Activated T-helper 2 cell treated with anti-CD3 and anti-CD28 coated beads, Interferon-gamma antibody, Interleukin-2, Interleukin-4, amounts not matched to agents 10 μg/mL and 5 μg/mL and 100 μg/mL, durations not matched to agents 14 hours and 24 hours and 36 hours (primary cell): ENCODE measurements at regions of chr10 and their contacts with region 1.

Region 1: GRCh38 chr10:23368816-23369640 is 24.4 kb upstream of the C10orf67 start:
- DNase-seq: peak; percentile 16
- H3K4me3 Mint-ChIP-seq: peak overlapping the region; percentile 53
- H3K27ac Mint-ChIP-seq: peak overlapping the region; percentile 60
- H3K4me1 Mint-ChIP-seq: peaks cover 55% of the 10 kb centered on the region
- H3K27me3 Mint-ChIP-seq: no peaks in the 10 kb centered on the region

Region 2: GRCh38 chr10:22962817-22963216 is 406.2 kb before region 1 on chr10:
- intact Hi-C with region 1: no loop called
- DNase-seq: no peak
- H3K4me3 Mint-ChIP-seq: no peak overlapping the region
- H3K27ac Mint-ChIP-seq: no peak overlapping the region
- H3K4me1 Mint-ChIP-seq: no peaks in the 10 kb centered on the region
- H3K27me3 Mint-ChIP-seq: peaks cover 16% of the 10 kb centered on the region

Region 3: DNA sequence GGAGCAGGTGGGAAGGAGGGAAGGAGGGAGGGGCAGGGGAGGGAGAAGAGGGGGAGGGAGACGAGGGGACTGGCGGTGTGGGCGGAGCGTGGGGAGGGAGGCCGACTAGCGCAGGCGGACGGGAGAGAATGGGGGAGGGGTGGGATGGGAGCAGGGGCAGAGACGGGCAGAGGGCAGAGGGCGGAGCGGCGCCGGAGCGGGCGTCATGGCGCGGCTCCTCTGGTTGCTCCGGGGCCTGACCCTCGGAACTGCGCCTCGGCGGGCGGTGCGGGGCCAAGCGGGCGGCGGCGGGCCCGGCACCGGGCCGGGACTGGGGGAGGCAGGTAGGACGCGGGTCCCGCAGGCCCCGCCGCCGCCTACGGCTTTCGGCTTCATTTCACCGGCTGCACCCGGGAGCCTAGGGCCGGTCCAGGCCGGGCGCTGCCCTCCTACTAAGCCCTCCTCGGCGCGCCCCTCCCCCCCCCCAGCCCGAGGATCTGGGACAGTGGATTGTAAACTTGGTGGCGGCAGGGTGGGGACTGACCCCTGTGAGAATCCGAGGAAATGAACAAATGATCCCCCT is 273.5 kb before region 1 on chr10 and contains the start of gene MSRB2:
- intact Hi-C with region 1: loop called (anchors 10 kb)
- DNase-seq: peak; percentile 66
- H3K4me3 Mint-ChIP-seq: peak within 1 kb of the TSS; percentile 88
- H3K27ac Mint-ChIP-seq: peak within 1 kb of the TSS; percentile 83
- H3K4me1 Mint-ChIP-seq: peaks cover 41% of the 10 kb centered on the region
- H3K27me3 Mint-ChIP-seq: peaks cover 17% of the 10 kb centered on the region
- total RNA-seq, gene MSRB2: 4.0 and 4.4 TPM in 2 replicates

Region 4: DNA sequence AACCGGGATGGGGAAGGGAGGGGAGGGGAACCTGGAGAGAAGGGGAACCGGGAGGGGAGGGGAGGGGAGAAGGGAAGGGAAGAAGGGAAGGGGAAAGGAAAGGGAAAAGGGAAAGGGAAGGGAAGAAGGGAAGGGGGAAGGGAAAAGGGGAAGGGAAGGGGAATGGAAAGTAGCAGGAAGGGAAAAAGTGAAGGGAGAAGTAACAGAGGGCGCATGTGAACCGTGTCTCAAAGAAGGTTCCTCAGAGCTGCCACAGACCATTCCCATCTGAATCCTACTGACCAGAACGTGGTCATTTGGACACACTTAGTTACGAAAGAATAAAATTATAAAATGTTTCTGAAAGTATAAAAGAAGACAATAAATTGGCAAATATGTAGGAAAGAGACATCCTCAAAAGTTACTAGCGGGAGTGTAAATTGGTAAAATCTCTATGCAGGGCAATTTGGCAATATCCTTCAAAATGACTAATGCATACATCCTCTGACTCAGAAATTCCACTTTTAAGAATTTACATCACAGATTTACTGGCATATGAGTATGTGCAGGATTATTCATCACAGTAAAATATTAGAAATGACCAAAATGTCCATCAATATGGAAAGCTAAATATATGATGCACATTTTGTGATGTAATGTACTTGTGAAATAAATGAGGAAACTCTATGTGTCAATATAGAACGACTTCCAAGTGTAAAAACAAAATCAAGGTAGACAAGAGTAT is 37.3 kb before region 1 on chr10:
- intact Hi-C with region 1: loop called (anchors 5 kb)
- DNase-seq: no peak
- H3K4me3 Mint-ChIP-seq: no peak overlapping the region
- H3K27ac Mint-ChIP-seq: peak overlapping the region; percentile 49
- H3K4me1 Mint-ChIP-seq: peaks cover 17% of the 10 kb centered on the region
- H3K27me3 Mint-ChIP-seq: peaks cover 3% of the 10 kb centered on the region

Region 5: GRCh38 chr10:23391821-23392220 is 22.8 kb after region 1 on chr10:
- intact Hi-C with region 1: loop called (anchors 2 kb)
- DNase-seq: no peak
- H3K4me3 Mint-ChIP-seq: no peak overlapping the region
- H3K27ac Mint-ChIP-seq: no peak overlapping the region
- H3K4me1 Mint-ChIP-seq: peaks cover 14% of the 10 kb centered on the region
- H3K27me3 Mint-ChIP-seq: no peaks in the 10 kb centered on the region

Region 6: DNA sequence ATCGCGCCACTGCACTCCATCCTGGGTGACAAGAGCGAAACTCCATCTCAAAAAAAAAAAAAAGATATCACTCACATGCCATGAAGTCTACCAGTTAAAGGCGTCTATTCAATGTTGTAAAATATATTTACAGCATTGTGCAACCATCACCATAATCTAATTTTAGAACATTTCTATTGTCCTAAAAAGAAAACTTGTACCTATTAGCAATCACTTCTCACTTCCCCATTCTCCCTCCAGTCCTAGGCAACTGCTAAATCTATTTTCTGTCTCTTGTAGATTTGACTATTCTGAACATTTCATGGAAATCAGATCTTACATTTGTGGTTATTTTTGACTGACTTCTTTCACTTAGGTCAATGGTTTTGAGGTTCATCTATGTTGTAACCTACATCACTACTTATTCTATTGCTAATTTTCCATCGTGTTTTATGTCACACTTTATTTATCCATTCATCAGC is 44.6 kb after region 1 on chr10:
- intact Hi-C with region 1: loop called (anchors 1 kb)
- DNase-seq: no peak
- H3K4me3 Mint-ChIP-seq: no peak overlapping the region
- H3K27ac Mint-ChIP-seq: peak overlapping the region; percentile 56
- H3K4me1 Mint-ChIP-seq: peaks cover 20% of the 10 kb centered on the region
- H3K27me3 Mint-ChIP-seq: no peaks in the 10 kb centered on the region